ENCODE measurements at regions of chr12 and their contacts with region 1.

Region 1: GRCh38 chr12:12696562-12697383 is 790 bp upstream of the GPR19 start:
- DNase-seq: peak; percentile 91 to 97
- ATAC-seq: peak; percentile 85 to 93 (median 89)
- H3K4me3 ChIP-seq: peak overlapping the region; percentile 68
- H3K4me3 Mint-ChIP-seq: peak overlapping the region; percentile 93
- H3K27ac ChIP-seq: peak overlapping the region; percentile 98
- H3K27ac Mint-ChIP-seq: peak overlapping the region; percentile 99 to 100
- H3K4me1 ChIP-seq: no peaks in the 10 kb centered on the region
- H3K4me1 Mint-ChIP-seq: peaks cover 26 to 27% of the 10 kb centered on the region in 2 donors
- H3K27me3 ChIP-seq: no peaks in the 10 kb centered on the region
- H3K27me3 Mint-ChIP-seq: no peaks in the 10 kb centered on the region
- CTCF ChIP-seq: no peak

Region 2: GRCh38 chr12:12356886-12357718 is 339.7 kb before region 1 on chr12 and contains the start of gene BORCS5:
- intact Hi-C with region 1: loop called (anchors 2 kb)
- DNase-seq: peak; percentile 95 to 99
- ATAC-seq: peak; percentile 92 to 98 (median 94)
- H3K4me3 ChIP-seq: peak within 1 kb of the TSS; percentile 78
- H3K4me3 Mint-ChIP-seq: peak within 1 kb of the TSS; percentile 96
- H3K27ac ChIP-seq: peak within 1 kb of the TSS; percentile 97
- H3K27ac Mint-ChIP-seq: peak within 1 kb of the TSS; percentile 92 to 97
- H3K4me1 ChIP-seq: peaks cover 23% of the 10 kb centered on the region
- H3K4me1 Mint-ChIP-seq: peaks cover 26 to 31% of the 10 kb centered on the region in 2 donors
- H3K27me3 ChIP-seq: no peaks in the 10 kb centered on the region
- H3K27me3 Mint-ChIP-seq: no peaks in the 10 kb centered on the region
- CTCF ChIP-seq: no peak
- total RNA-seq, gene BORCS5: 28.5 to 32.8 (median 29.2) TPM

Region 3: DNA sequence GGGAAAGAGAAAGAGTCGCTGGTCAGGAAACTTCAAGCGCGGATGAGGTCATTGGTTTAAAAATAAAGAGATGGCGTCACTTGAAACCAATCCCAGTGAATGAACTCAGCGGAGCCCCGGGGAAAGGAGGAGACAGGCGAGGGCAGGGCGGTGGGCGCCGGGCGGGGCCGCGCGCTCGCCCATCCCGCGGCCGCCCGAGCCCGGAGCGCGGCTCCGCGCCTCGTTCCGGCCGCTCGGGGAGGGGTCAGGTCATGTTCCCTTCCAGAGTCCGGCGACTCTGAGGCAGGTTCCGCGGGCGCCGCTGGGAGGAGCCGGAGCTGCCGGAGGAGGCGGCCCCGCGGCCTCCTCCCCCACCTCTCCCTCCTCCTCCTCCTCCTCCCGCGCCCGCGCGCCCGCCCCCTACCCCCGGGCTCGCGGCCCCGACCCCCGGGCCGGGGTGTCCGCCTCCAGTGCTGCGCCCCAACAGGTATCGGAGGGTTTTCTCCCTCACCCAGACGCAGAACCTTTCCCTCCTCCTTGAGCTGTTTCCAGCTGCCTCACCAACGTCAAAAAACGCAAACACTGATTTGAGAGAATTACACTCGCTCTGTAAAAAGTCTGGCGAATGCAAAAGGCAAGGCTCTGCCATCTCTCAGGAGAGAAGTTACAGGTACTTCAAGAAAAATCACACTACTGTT is 134.1 kb before region 1 on chr12 and contains the start of gene DUSP16:
- intact Hi-C with region 1: loop called (anchors 1 kb)
- DNase-seq: peak; percentile 74 to 93
- ATAC-seq: peak; percentile 74 to 92 (median 84)
- H3K4me3 ChIP-seq: peak within 1 kb of the TSS; percentile 67
- H3K4me3 Mint-ChIP-seq: peak within 1 kb of the TSS; percentile 95
- H3K27ac ChIP-seq: peak within 1 kb of the TSS; percentile 88
- H3K27ac Mint-ChIP-seq: peak within 1 kb of the TSS; percentile 90 to 96
- H3K4me1 ChIP-seq: peaks cover 10% of the 10 kb centered on the region
- H3K4me1 Mint-ChIP-seq: peaks cover 10 to 13% of the 10 kb centered on the region in 2 donors
- H3K27me3 ChIP-seq: no peaks in the 10 kb centered on the region
- H3K27me3 Mint-ChIP-seq: peaks cover 0 to 3% of the 10 kb centered on the region in 2 donors
- CTCF ChIP-seq: no peak
- total RNA-seq, gene DUSP16: 6.9 to 19.9 (median 10.0) TPM

Region 4: DNA sequence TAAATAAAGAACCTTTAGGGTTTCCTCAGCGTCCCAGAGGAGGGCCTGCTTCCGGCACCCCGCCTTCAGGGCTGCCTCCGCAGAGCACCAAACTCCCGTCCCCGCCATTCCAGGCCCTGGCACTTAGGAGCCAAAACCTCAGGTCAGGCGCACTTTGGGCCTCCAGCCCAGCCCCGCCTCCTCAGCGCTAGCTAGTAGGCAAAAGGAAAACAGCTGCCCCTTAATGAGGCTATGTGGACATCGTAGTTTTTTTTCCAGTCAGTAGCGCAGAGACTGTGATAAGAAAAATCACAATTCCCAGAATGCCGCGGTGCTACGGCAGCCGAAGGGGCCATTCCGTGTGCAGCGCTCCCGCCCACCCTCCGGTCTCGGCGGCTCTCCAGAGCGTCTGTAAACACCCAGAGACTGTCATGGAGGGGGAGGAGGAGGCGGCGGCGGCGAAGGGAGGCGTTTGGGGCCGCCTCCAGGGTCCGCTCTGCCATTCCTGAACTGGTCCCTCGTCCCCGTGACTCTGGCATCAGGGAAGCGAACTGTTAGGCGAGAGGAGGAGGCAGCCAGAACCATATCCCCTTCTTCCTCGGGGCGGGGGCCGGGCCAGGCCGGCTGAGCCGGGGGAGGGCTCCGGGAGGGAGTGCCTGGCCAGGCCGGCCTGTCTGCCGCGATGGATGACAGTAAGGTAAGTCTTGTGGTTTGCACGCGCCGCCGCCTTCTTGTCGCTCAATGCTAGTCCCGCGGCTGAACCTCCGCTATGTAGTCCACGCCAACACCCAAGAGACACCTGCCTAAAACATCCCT is 85.1 kb before region 1 on chr12 and contains the start of gene CREBL2:
- intact Hi-C with region 1: loop called (anchors 1 kb)
- DNase-seq: peak; percentile 84 to 94
- ATAC-seq: peak; percentile 93 to 97 (median 94)
- H3K4me3 ChIP-seq: peak within 1 kb of the TSS; percentile 84
- H3K4me3 Mint-ChIP-seq: peak within 1 kb of the TSS; percentile 90
- H3K27ac ChIP-seq: peak within 1 kb of the TSS; percentile 87
- H3K27ac Mint-ChIP-seq: peak within 1 kb of the TSS; percentile 90 to 98
- H3K4me1 ChIP-seq: peaks cover 17% of the 10 kb centered on the region
- H3K4me1 Mint-ChIP-seq: peaks cover 34 to 36% of the 10 kb centered on the region in 2 donors
- H3K27me3 ChIP-seq: no peaks in the 10 kb centered on the region
- H3K27me3 Mint-ChIP-seq: no peaks in the 10 kb centered on the region
- CTCF ChIP-seq: no peak
- total RNA-seq, gene CREBL2: 9.0 to 13.1 (median 10.7) TPM

Region 5: DNA sequence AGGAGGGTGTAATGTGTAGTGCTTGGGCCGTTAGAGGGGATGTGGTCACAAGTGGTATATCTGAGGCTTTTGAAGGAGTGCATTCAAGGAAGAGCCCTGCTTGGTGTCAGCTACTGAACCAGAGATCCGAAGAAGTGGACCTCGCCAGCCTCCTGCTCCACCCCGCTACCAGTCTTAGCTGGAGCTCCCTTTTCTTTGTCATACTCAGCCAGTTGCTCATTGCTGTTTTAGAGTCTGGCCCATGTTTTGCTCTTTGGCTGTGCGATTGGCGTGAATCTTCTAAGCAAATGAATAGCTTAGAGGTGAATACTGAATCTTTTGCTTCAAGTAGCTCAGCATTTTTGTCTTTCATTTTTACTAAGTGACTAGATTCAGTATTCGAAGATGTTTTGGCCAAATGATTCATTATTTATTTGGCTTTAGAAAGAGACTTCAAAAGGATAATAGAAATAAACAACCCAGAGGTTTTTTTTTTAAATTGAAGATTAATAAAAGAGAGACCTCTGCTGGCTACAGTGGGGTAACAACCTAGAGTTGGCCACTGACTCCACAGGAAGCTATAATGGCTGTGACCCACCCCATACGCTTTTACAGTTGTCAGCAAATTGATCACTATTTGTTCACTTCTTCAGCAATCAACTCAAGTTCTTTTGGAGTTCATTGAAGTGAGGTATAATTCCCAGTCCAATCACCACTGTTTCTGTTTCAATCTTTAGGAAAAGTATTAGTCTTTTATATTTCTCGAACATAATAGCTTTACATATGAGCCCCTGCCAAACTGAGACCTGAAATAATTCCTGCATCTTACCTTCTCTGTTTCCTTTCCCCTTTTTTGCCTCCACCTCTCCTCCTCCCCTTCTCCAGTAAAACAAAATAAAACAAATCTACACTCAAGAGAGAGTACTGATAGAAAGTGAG is 40.2 kb after region 1 on chr12:
- intact Hi-C with region 1: loop called (anchors 1 kb)
- DNase-seq: peak; percentile 59 to 80
- ATAC-seq: peak; percentile 85 to 93 (median 91)
- H3K4me3 ChIP-seq: peak overlapping the region; percentile 43
- H3K4me3 Mint-ChIP-seq: peak overlapping the region; percentile 77
- H3K27ac ChIP-seq: peak overlapping the region; percentile 92
- H3K27ac Mint-ChIP-seq: peak overlapping the region; percentile 94
- H3K4me1 ChIP-seq: peaks cover 30% of the 10 kb centered on the region
- H3K4me1 Mint-ChIP-seq: peaks cover 31% of the 10 kb centered on the region in 2 donors
- H3K27me3 ChIP-seq: no peaks in the 10 kb centered on the region
- H3K27me3 Mint-ChIP-seq: no peaks in the 10 kb centered on the region
- CTCF ChIP-seq: peak; percentile 73